Activated CD4-positive, alpha-beta T cell treated with anti-CD3 and anti-CD28 coated beads, Interleukin-2, amount 10 ng/mL, durations not matched to agents 24 days and 14 days (primary cell): ENCODE measurements at regions of chr4 and their contacts with region 1.

Region 1: GRCh38 chr4:7761720-7762119 is 177.9 kb downstream of the AFAP1 start:
- DNase-seq: peak; percentile 83
- H3K4me3 Mint-ChIP-seq: no peak overlapping the region
- H3K27ac Mint-ChIP-seq: no peak overlapping the region
- H3K4me1 Mint-ChIP-seq: peaks cover 30% of the 10 kb centered on the region
- H3K27me3 Mint-ChIP-seq: no peaks in the 10 kb centered on the region

Region 2: GRCh38 chr4:7649741-7650531 is 111.8 kb before region 1 on chr4:
- intact Hi-C with region 1: loop called (anchors 5 kb)
- DNase-seq: peak; percentile 82
- H3K4me3 Mint-ChIP-seq: peak overlapping the region; percentile 24
- H3K27ac Mint-ChIP-seq: peak overlapping the region; percentile 81
- H3K4me1 Mint-ChIP-seq: peaks cover 34% of the 10 kb centered on the region
- H3K27me3 Mint-ChIP-seq: no peaks in the 10 kb centered on the region

Region 3: GRCh38 chr4:7747062-7747385 is 14.7 kb before region 1 on chr4:
- intact Hi-C with region 1: no loop called
- DNase-seq: no peak
- H3K4me3 Mint-ChIP-seq: no peak overlapping the region
- H3K27ac Mint-ChIP-seq: no peak overlapping the region
- H3K4me1 Mint-ChIP-seq: peaks cover 15% of the 10 kb centered on the region
- H3K27me3 Mint-ChIP-seq: no peaks in the 10 kb centered on the region

Region 4: GRCh38 chr4:7781366-7781765 is 19.6 kb after region 1 on chr4:
- intact Hi-C with region 1: loop called (anchors 1 kb)
- DNase-seq: no peak
- H3K4me3 Mint-ChIP-seq: peak overlapping the region; percentile 52
- H3K27ac Mint-ChIP-seq: peak overlapping the region; percentile 85
- H3K4me1 Mint-ChIP-seq: peaks cover 33% of the 10 kb centered on the region
- H3K27me3 Mint-ChIP-seq: no peaks in the 10 kb centered on the region

Region 5: GRCh38 chr4:7960790-7961655 is 199.3 kb after region 1 on chr4:
- intact Hi-C with region 1: loop called (anchors 5 kb)
- DNase-seq: peak; percentile 91
- H3K4me3 Mint-ChIP-seq: peak overlapping the region; percentile 63
- H3K27ac Mint-ChIP-seq: peak overlapping the region; percentile 97
- H3K4me1 Mint-ChIP-seq: peaks cover 56% of the 10 kb centered on the region
- H3K27me3 Mint-ChIP-seq: peaks cover 5% of the 10 kb centered on the region